ENCODE measurements at regions of chr1 and their contacts with region 1.

Region 1: DNA sequence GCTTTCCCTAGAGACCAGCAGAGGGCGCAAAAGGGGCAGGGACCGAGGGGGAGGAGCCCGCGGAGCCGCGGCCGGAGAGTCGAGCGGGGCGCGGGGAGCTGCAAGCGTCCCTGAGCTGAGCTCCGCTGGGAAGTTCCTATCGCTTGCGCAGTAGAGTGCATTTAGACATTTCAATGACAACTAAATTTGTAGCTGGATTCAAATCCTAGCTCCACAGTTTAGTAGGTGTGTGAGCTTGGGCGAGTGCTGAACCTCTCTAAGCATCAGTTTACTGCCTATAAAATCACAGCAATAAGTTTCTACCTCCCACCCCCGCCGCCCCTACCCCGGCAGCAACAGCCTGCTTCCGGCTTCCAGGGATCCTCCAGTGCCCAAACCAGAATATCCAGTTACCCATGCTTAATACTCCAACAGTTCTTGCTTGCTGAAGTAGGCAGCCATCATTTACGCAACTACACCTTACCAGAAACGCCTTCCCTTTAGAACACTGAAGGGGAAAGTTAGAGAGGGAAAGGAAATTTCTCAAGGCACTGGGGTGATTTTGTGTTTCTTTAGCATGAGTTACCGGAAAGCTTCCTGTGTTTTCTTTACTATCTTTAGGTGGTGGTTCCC is 9.1 kb downstream of the TLR5 start:
- DNase-seq: peak; percentile 79
- H3K4me3 ChIP-seq: peak overlapping the region in 2 of 3 experiments; percentile 2 to 50
- H3K27ac ChIP-seq: no peak overlapping the region
- H3K4me1 ChIP-seq: peaks cover 8% of the 10 kb centered on the region
- H3K27me3 ChIP-seq: peaks cover 30 to 31% of the 10 kb centered on the region in 2 experiments
- CTCF ChIP-seq: peak; percentile 94 to 98
- POLR2A ChIP-seq: no peak

Region 2: GRCh38 chr1:223081181-223081994 is 52.5 kb before region 1 on chr1:
- CTCF ChIA-PET with region 1: interaction called, 16 read pairs
- POLR2A ChIA-PET with region 1: no interaction called
- dilution Hi-C with region 1: no loop called
- intact Hi-C with region 1: no loop called
- DNase-seq: peak; percentile 77
- H3K4me3 ChIP-seq: no peak overlapping the region
- H3K27ac ChIP-seq: no peak overlapping the region
- H3K4me1 ChIP-seq: peaks cover 6% of the 10 kb centered on the region
- H3K27me3 ChIP-seq: peaks cover 0 to 1% of the 10 kb centered on the region in 2 experiments
- CTCF ChIP-seq: peak; percentile 91 to 96
- POLR2A ChIP-seq: no peak

Region 3: DNA sequence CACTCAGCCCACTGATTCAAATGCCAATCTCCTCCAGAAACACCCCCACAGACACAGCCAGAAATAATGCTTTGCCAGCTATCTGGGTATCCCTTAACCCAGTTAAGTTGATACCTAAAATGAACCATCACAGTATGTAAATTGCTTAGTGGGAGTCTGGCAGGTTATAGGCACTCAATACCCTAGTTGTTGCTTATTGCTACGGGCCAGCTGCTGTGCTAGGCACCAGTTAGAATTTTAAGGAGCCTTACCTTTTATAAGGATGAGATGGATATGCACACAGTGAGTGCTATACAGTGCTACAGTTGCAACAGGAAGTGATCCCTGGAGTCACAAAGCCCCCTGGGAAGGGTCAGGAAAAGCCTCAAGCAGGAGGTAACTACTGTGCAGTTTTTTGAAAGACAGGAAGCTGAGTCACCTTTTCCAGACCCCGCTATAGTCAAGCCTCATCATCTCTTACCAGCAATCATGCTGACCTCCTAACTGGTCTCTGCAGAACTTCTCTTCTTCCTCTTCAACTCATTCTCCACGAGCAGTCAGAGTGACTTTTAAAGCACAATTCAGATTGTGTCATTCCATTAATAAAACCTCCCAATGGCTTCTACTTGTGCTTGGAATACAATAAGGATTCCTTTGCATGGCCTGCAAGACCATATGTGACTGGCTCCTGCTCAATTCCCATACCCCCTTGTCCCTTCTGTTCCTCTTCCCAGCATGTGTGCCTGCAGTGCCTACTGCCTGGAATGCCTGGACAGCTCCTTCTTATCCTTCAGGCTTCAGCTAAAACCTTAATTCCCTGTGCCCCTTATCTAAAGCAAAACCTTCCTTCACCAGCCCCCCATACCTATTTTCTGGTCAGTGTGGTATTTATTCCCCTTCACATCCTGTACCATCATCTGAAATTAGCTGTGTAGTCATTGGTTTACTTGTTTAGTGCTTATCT is 19.5 kb after region 1 on chr1:
- CTCF ChIA-PET with region 1: interaction called, 24 read pairs
- POLR2A ChIA-PET with region 1: no interaction called
- dilution Hi-C with region 1: no loop called
- intact Hi-C with region 1: no loop called
- DNase-seq: peak; percentile 72
- H3K4me3 ChIP-seq: no peak overlapping the region
- H3K27ac ChIP-seq: peak overlapping the region; percentile 10
- H3K4me1 ChIP-seq: peaks cover 12% of the 10 kb centered on the region
- H3K27me3 ChIP-seq: peaks cover 0 to 3% of the 10 kb centered on the region in 2 experiments
- CTCF ChIP-seq: no peak
- POLR2A ChIP-seq: no peak

Region 4: GRCh38 chr1:223244366-223245103 is 110.6 kb after region 1 on chr1:
- CTCF ChIA-PET with region 1: interaction called, 80 read pairs
- POLR2A ChIA-PET with region 1: no interaction called
- dilution Hi-C with region 1: no loop called
- intact Hi-C with region 1: loop called (anchors 1 kb)
- DNase-seq: peak; percentile 32
- H3K4me3 ChIP-seq: no peak overlapping the region
- H3K27ac ChIP-seq: no peak overlapping the region
- H3K4me1 ChIP-seq: no peaks in the 10 kb centered on the region
- H3K27me3 ChIP-seq: no peaks in the 10 kb centered on the region
- CTCF ChIP-seq: peak in 1 of 2 donors; percentile 14
- POLR2A ChIP-seq: no peak

Region 5: GRCh38 chr1:223683586-223684487 is 549.9 kb after region 1 on chr1:
- CTCF ChIA-PET with region 1: interaction called, 104 read pairs
- POLR2A ChIA-PET with region 1: no interaction called
- dilution Hi-C with region 1: no loop called
- intact Hi-C with region 1: loop called (anchors 1 kb)
- DNase-seq: peak; percentile 55
- H3K4me3 ChIP-seq: no peak overlapping the region
- H3K27ac ChIP-seq: no peak overlapping the region
- H3K4me1 ChIP-seq: no peaks in the 10 kb centered on the region
- H3K27me3 ChIP-seq: peaks cover 9 to 24% of the 10 kb centered on the region in 2 experiments
- CTCF ChIP-seq: peak; percentile 54 to 68
- POLR2A ChIP-seq: no peak